Activated CD4-positive, alpha-beta T cell treated with anti-CD3 and anti-CD28 coated beads for 36 hours (primary cell): ENCODE measurements at regions of chr5 and their contacts with region 1.

Region 1: DNA sequence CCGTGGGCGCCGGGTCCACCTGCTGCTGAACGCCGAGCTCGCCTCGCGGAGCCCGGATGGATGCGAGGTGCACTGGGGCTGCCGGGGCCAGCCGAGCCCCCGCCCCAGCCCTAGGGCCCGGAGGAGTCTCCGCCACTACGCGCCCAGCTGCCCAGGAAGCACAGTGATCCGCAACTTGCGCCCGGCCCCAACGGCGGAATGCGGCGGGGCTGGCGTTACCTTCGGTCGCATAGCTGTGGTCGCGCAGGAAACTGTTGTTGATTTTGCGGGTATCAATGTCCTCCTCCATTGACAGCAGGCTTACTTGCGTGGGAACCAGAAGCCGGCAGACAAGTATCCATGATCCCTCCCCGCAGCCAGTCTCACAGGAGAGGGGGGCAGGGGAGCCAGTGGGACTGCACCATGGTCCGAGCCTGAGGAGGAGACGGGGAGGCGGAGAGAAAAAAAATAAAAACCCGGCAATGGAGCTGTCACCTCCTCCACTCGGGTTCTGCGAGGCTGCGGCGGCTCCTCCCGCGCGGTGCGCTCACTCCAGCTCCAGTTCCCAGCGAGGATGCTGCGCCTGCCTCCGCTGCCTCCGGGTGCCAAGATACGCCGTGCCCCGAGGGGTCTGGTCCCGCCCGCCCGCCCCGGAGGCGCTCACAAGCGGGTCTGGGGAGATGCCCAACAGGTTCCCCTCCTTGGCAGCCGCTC is 628 bp downstream of the PPP2R2B start:
- DNase-seq: peak; percentile 45
- ATAC-seq: peak; percentile 37
- H3K4me3 Mint-ChIP-seq: peak overlapping the region; percentile 79
- H3K27ac Mint-ChIP-seq: no peak overlapping the region
- H3K4me1 Mint-ChIP-seq: peaks cover 8% of the 10 kb centered on the region
- H3K27me3 Mint-ChIP-seq: peaks cover 34% of the 10 kb centered on the region

Region 2: DNA sequence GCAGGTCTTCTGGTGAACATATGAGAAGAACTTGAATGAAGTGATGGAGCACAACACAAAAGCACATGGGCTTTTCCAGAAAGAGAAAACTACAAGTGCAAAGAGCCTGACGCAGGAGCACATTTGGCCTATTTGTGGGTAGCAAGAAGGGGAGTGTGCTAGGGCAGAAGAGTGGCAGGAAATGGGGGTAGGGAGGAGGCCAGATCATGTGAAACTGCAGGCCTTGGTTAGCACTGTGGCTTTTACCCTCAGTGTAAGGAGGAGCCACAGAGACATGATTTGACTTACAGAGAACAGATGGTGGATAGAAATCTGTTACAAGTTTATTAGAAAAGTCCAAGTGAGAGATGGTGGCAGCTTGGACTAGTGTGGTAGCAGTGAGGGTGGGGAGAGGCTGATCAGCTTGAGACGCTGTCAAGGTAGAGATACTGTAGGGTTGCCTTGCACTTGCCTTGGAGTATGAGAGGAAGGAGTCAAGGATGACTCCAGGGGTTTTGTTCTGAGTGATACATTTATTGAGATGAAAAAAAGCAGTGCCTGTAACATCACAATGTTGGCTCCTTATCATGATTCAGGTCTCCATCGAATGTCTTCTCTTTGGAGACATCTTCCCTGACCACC is 126.0 kb before region 1 on chr5:
- CTCF ChIA-PET with region 1: interaction called, 3 read pairs
- POLR2A ChIA-PET with region 1: no interaction called
- intact Hi-C with region 1: loop called in 1 of 2 experiments (anchors 2 kb)
- DNase-seq: peak; percentile 68
- ATAC-seq: peak; percentile 97
- H3K4me3 Mint-ChIP-seq: no peak overlapping the region
- H3K27ac Mint-ChIP-seq: peak overlapping the region; percentile 80
- H3K4me1 Mint-ChIP-seq: peaks cover 46% of the 10 kb centered on the region
- H3K27me3 Mint-ChIP-seq: no peaks in the 10 kb centered on the region

Region 3: DNA sequence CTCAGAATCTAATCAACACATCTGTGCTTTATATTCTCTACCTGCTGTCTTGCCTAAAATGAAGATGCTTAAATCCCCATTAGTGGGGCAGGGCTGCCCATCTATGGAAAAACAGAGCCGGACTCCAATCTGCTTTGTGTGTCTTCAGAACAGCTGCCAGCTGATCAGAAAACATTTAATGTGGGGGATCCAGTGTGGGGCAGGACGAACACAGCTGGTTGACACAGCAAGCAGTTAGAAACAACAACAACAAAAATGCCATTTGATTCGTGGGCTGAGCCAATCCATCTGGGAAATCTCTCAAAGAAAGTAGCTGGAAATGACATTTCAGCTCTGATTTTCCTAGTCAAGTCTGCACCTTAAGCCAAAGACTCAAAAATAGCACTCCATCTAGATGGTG is 99.1 kb before region 1 on chr5:
- CTCF ChIA-PET with region 1: no interaction called
- POLR2A ChIA-PET with region 1: no interaction called
- intact Hi-C with region 1: no loop called
- DNase-seq: no peak
- ATAC-seq: no peak
- H3K4me3 Mint-ChIP-seq: no peak overlapping the region
- H3K27ac Mint-ChIP-seq: no peak overlapping the region
- H3K4me1 Mint-ChIP-seq: no peaks in the 10 kb centered on the region
- H3K27me3 Mint-ChIP-seq: no peaks in the 10 kb centered on the region

Region 4: GRCh38 chr5:146860213-146860893 is 17.6 kb before region 1 on chr5:
- CTCF ChIA-PET with region 1: no interaction called
- POLR2A ChIA-PET with region 1: no interaction called
- intact Hi-C with region 1: no loop called
- DNase-seq: no peak
- ATAC-seq: peak; percentile 61
- H3K4me3 Mint-ChIP-seq: no peak overlapping the region
- H3K27ac Mint-ChIP-seq: no peak overlapping the region
- H3K4me1 Mint-ChIP-seq: peaks cover 7% of the 10 kb centered on the region
- H3K27me3 Mint-ChIP-seq: no peaks in the 10 kb centered on the region

Region 5: GRCh38 chr5:147160902-147161700 is 283.2 kb after region 1 on chr5:
- CTCF ChIA-PET with region 1: no interaction called
- POLR2A ChIA-PET with region 1: no interaction called
- intact Hi-C with region 1: no loop called
- DNase-seq: no peak
- ATAC-seq: no peak
- H3K4me3 Mint-ChIP-seq: no peak overlapping the region
- H3K27ac Mint-ChIP-seq: no peak overlapping the region
- H3K4me1 Mint-ChIP-seq: no peaks in the 10 kb centered on the region
- H3K27me3 Mint-ChIP-seq: peaks cover 2% of the 10 kb centered on the region